ENCODE measurements at regions of chr5 and their contacts with region 1.

Region 1: GRCh38 chr5:78908173-78909061 is 76.7 kb downstream of the ARSB start:
- DNase-seq: peak; percentile 60 to 79
- ATAC-seq: peak; percentile 78 to 93 (median 88)
- H3K4me3 ChIP-seq: peak overlapping the region in 8 of 10 donors; percentile 4 to 37 (median 18)
- H3K27ac ChIP-seq: peak overlapping the region; percentile 36 to 86 (median 77)
- H3K4me1 ChIP-seq: peaks cover 4 to 65% (median 48%) of the 10 kb centered on the region in 9 donors
- H3K27me3 ChIP-seq: no peaks in the 10 kb centered on the region
- CTCF ChIP-seq: peak in 1 of 9 donors; percentile 10

Region 2: DNA sequence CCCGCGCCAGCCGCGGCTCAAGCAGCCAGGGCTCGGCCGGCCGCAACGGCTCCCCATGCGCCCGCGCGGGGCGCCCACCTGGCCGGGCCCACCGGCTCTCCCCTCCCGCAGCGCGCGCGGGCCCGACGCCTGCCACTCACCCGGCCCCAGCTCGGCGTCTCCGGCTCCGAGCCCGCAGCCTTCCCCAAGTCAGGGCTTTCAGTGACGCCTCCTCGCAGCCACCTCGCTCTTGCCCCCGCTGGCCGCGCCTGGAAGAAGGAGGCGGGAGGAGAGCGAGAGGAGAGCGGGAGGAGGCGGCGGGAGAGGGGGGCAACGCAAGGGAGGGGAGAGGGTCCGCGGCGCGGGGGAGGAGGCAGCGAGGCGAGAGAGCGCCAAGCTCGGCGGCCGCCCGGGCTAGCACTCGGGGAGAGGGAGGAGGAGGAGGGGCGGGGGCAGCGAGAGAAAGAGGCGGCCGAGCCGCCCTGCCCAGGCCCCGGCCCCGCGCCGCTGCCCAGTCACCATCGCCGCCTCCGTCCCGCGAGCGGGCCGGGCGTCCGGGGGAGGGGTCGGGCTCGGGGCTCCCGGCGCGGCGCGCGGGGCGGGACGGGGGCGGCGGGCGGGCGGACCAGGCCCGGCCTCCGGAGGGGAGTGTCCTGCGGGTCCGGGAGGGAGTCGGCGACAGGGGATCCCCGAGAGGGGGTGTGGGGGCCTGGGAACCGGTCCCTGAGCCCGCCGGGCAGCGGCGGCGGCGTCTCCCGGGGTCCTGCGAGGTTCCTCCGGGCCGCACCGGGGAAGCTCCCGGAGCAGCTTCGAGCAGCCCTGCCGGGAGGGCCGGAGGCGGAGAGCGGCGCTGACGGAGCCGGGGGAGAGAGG is 259.8 kb before region 1 on chr5 and contains the start of gene LHFPL2:
- intact Hi-C with region 1: loop called in 1 of 10 experiments (anchors 10 kb)
- DNase-seq: peak; percentile 72 to 82
- ATAC-seq: peak; percentile 74 to 92 (median 84)
- H3K4me3 ChIP-seq: peak within 1 kb of the TSS; percentile 70 to 89 (median 80)
- H3K27ac ChIP-seq: peak within 1 kb of the TSS; percentile 76 to 96 (median 94)
- H3K4me1 ChIP-seq: peaks cover 0 to 41% (median 20%) of the 10 kb centered on the region in 9 donors
- H3K27me3 ChIP-seq: peaks cover 0 to 28% (median 0%) of the 10 kb centered on the region in 7 donors
- CTCF ChIP-seq: no peak
- total RNA-seq, gene LHFPL2: 3.8 to 14.9 (median 5.1) TPM

Region 3: DNA sequence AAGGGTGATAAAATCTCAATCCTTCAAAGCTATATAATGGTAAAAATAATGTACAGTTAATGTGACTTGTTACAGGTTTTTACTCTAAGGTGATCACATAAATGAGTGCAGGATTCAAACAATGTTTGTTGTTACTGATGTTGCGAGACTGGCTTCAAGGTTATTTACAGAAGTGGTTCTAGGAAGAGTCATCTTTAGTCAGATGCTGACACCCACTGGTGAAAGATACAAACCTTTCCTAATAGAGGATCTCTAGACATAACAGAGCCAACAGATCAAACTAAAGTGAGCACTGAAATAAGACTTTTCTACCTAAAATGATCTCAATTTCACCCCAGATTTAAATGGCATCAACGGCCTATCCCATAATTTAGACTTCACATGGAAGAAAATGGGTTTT is 56.5 kb after region 1 on chr5:
- intact Hi-C with region 1: loop called in 3 of 10 experiments (anchors 5 kb)
- DNase-seq: peak in 1 of 2 donors; percentile 41
- ATAC-seq: peak; percentile 69 to 90 (median 81)
- H3K4me3 ChIP-seq: no peak overlapping the region
- H3K27ac ChIP-seq: no peak overlapping the region
- H3K4me1 ChIP-seq: no peaks in the 10 kb centered on the region
- H3K27me3 ChIP-seq: no peaks in the 10 kb centered on the region
- CTCF ChIP-seq: peak; percentile 8 to 76 (median 55)

Region 4: GRCh38 chr5:78972654-78973428 is 64.4 kb after region 1 on chr5:
- intact Hi-C with region 1: loop called in 2 of 10 experiments (anchors 5 kb)
- DNase-seq: peak in 1 of 2 donors; percentile 15
- ATAC-seq: peak in 6 of 8 donors; percentile 44 to 75 (median 58)
- H3K4me3 ChIP-seq: peak overlapping the region in 1 of 10 donors; percentile 4
- H3K27ac ChIP-seq: peak overlapping the region in 4 of 10 donors; percentile 1 to 55 (median 14)
- H3K4me1 ChIP-seq: peaks cover 0 to 32% (median 19%) of the 10 kb centered on the region in 9 donors
- H3K27me3 ChIP-seq: no peaks in the 10 kb centered on the region
- CTCF ChIP-seq: no peak

Region 5: GRCh38 chr5:78984439-78985115 is 76.2 kb after region 1 on chr5:
- intact Hi-C with region 1: loop called in 1 of 10 experiments (anchors 5 kb)
- DNase-seq: peak; percentile 87
- ATAC-seq: peak; percentile 91 to 94 (median 92)
- H3K4me3 ChIP-seq: peak overlapping the region; percentile 56 to 92 (median 83)
- H3K27ac ChIP-seq: peak overlapping the region; percentile 92 to 99 (median 97)
- H3K4me1 ChIP-seq: peaks cover 0 to 35% (median 14%) of the 10 kb centered on the region in 9 donors
- H3K27me3 ChIP-seq: no peaks in the 10 kb centered on the region
- CTCF ChIP-seq: peak in 7 of 9 donors; percentile 26 to 65 (median 44)

Region 6: DNA sequence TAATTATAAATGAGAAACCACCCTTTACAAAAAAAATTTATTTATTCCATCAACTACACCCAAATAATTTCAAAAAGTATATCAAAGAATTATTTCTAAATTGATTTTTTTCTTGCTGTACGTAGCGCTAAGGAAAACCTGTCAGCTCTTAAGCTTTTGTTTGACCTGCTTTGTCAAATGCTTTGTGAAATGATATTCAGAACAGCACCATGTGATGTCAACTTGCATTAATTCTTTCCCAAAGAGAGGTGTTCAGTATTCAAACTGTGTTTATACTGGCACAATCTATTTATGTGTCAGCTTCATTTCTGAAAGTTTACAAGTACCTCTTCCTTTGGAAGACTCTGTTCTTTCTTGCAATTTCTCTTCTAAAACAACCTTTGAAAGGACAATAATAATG is 88.7 kb after region 1 on chr5:
- intact Hi-C with region 1: no loop called
- DNase-seq: no peak
- ATAC-seq: no peak
- H3K4me3 ChIP-seq: no peak overlapping the region
- H3K27ac ChIP-seq: no peak overlapping the region
- H3K4me1 ChIP-seq: no peaks in the 10 kb centered on the region
- H3K27me3 ChIP-seq: no peaks in the 10 kb centered on the region
- CTCF ChIP-seq: no peak

Region 7: DNA sequence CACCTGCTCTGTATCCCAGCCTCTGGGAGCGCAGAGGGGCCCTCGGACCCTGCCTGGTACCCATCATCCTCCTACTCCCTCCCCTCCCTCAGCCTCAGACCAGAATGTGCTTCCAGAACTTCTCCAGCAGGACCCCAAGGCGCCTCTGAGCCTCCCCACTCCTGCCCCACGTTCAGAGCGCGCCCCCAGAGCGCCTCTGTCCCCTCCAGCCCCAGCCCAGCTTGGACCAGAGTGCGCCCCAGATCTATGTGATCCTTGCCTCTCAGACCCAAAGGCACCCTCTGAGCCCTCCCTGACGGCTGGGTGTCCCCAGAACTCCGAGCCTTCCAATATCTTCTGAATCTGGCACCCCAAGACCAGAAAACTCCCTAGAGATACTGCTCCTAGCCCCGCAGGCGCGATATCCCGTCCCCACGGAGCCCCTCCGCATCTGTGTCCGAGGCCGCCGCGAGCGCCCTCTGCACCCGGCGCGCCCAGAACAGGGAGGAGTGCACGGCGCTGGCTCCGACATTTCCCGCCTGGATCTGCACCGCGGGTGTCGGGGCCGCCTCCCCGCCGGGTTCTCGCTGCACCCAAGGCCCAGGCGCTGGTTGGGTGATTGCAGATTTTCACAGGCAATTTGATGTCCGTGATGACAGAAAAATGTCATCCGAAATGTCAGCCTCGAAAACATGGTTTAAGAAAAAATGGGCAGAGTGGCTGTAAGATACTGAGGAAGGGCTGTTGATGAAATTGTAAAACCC is 203.7 kb after region 1 on chr5:
- intact Hi-C with region 1: no loop called
- DNase-seq: peak in 1 of 2 donors; percentile 14
- ATAC-seq: peak in 2 of 8 donors; percentile 53 to 62
- H3K4me3 ChIP-seq: peak overlapping the region in 2 of 10 donors; percentile 11 to 14
- H3K27ac ChIP-seq: no peak overlapping the region
- H3K4me1 ChIP-seq: peaks cover 0 to 21% (median 9%) of the 10 kb centered on the region in 9 donors
- H3K27me3 ChIP-seq: peaks cover 11 to 78% (median 56%) of the 10 kb centered on the region in 7 donors
- CTCF ChIP-seq: no peak